Testis (tissue), 5 donors: ENCODE measurements at regions of chr2 and their contacts with region 1.

Region 1: GRCh38 chr2:189674374-189675112 is at the start of gene ANKAR:
- DNase-seq: peak; percentile 92
- H3K4me3 ChIP-seq: peak within 1 kb of the TSS; percentile 71 to 83
- H3K27ac ChIP-seq: peak within 1 kb of the TSS; percentile 97 to 98
- H3K4me1 ChIP-seq: peaks cover 5% of the 10 kb centered on the region
- H3K27me3 ChIP-seq: no peaks in the 10 kb centered on the region
- CTCF ChIP-seq: peak; percentile 67 to 85 (median 81)
- POLR2A ChIP-seq: no peak
- total RNA-seq, gene ANKAR: 20.3 to 32.8 TPM

Region 2: DNA sequence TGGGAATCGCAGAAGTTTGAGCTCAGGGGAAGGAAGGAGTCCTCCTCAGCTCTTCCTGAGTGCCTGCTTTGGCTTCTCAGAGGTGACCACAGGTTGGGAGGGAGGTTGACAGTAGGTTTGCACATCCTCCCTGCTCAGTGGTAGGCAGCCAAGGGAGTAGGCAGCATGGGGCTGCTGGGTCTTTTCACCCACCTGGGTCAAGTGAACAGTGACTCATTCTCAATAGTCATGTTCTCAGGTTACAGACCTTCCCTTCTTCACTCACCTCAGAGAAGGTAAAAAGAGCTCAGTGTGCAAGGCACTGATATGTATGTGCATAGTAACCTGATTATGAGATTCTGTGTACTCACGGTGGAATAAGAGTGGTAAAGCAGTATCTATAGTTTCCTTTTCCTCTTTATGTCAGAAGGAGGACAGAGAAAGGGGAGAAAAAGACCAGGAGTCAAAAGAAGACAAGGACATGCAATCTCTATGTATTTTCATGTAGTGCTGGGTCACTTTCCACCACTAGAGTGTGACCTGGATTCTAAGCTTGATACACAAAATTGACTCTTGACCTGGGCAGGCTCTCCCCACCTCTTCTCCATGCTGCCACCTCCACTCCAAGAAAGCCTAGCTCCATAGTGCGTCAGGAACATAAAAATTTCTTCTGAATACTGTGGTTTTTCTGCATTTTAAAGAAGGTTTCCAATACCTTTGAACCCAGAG is 49.7 kb before region 1 on chr2:
- intact Hi-C with region 1: no loop called
- DNase-seq: no peak
- H3K4me3 ChIP-seq: no peak overlapping the region
- H3K27ac ChIP-seq: no peak overlapping the region
- H3K4me1 ChIP-seq: no peaks in the 10 kb centered on the region
- H3K27me3 ChIP-seq: no peaks in the 10 kb centered on the region
- CTCF ChIP-seq: no peak
- POLR2A ChIP-seq: no peak

Region 3: DNA sequence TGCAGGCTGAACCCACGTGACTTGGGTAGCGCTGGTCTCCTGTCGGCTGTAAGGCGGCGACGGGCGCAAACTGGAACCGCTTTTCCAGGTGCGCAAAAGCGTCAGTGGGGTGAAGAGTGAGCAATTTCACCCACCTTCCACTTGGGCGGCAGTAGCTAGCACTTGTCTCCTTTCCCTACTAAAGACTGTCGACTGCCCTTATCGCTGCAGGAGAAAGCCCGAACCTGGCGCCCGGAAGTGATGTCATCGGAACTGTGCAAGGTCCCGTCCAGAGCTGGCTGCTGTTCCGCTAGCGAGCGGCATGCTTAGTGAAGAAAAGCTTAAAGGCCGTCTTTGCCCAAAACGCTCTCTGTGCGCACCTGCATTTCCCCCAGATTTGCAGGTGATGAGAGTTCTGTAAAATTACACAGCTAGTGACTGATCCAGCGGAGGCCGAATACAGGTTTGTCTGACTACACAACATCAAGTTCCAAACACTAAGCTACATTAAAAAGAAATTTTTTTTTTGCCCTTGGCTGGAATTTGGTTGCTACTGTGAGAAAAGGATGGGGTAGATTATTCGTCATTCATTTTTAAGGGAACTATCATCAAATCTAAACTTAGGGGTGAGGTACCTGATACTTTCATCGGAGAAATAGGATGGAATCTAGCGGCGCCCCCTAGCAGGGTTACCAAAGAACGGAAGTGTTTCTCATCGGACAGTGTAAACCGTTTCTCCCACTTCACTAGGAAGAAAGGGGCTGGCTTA is 88.2 kb after region 1 on chr2 and contains the start of gene OSGEPL1:
- intact Hi-C with region 1: loop called (anchors 5 kb)
- DNase-seq: peak; percentile 99
- H3K4me3 ChIP-seq: peak within 1 kb of the TSS; percentile 73 to 77
- H3K27ac ChIP-seq: peak within 1 kb of the TSS; percentile 82 to 91
- H3K4me1 ChIP-seq: no peaks in the 10 kb centered on the region
- H3K27me3 ChIP-seq: no peaks in the 10 kb centered on the region
- CTCF ChIP-seq: peak in 2 of 3 experiments; percentile 22 to 39
- POLR2A ChIP-seq: peak; percentile 18
- total RNA-seq, gene OSGEPL1: 15.7 TPM